Activated T-helper 2 cell treated with anti-CD3 and anti-CD28 coated beads, Interferon-gamma antibody, Interleukin-2, Interleukin-4, amounts not matched to agents 10 μg/mL and 5 μg/mL and 100 μg/mL, durations not matched to agents 14 hours and 24 hours and 36 hours (primary cell): ENCODE measurements at regions of chr17 and their contacts with region 1.

Region 1: GRCh38 chr17:34386697-34387550 is 23.9 kb upstream of the CCL1 start:
- DNase-seq: no peak
- H3K4me3 Mint-ChIP-seq: peak overlapping the region; percentile 23
- H3K27ac Mint-ChIP-seq: peak overlapping the region; percentile 94
- H3K4me1 Mint-ChIP-seq: peaks cover 82% of the 10 kb centered on the region
- H3K27me3 Mint-ChIP-seq: no peaks in the 10 kb centered on the region

Region 2: GRCh38 chr17:33964344-33964979 is 422.5 kb before region 1 on chr17:
- intact Hi-C with region 1: loop called (anchors 10 kb)
- DNase-seq: peak; percentile 23
- H3K4me3 Mint-ChIP-seq: no peak overlapping the region
- H3K27ac Mint-ChIP-seq: no peak overlapping the region
- H3K4me1 Mint-ChIP-seq: peaks cover 36% of the 10 kb centered on the region
- H3K27me3 Mint-ChIP-seq: peaks cover 4% of the 10 kb centered on the region

Region 3: GRCh38 chr17:34398990-34399389 is 12.1 kb after region 1 on chr17:
- intact Hi-C with region 1: loop called (anchors 1 kb)
- DNase-seq: no peak
- H3K4me3 Mint-ChIP-seq: no peak overlapping the region
- H3K27ac Mint-ChIP-seq: peak overlapping the region; percentile 73
- H3K4me1 Mint-ChIP-seq: peaks cover 41% of the 10 kb centered on the region
- H3K27me3 Mint-ChIP-seq: peaks cover 4% of the 10 kb centered on the region

Region 4: DNA sequence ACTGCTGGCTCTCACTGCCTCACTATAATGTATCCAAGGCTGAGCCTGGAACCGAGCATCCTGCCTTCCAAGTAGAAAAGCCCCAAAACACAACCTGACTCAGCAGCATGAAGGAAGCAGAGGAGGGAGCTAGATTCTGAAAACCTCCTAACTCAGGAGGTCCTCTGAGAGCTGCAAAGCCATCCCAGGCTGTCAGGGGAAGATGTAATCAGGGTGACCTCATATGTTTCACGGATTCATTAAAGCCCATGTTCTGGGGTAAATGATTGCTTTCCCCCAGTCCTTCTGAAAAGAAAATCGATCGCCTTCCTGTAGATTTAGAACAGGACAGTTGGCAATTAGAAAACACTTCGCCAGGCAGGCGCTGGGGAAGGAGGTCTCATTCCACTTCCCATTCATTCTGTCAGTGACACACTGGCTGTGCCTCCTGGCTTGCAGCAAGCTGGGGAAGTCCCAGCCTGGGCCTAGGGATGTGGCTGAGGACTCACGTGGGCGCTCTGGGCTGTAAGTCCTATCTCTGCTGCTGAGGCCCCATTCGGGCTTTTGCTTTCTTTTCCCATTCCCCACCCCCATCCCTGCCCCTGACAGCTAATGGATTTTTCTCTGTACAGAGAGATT is 116.7 kb after region 1 on chr17:
- intact Hi-C with region 1: loop called (anchors 5 kb)
- DNase-seq: no peak
- H3K4me3 Mint-ChIP-seq: no peak overlapping the region
- H3K27ac Mint-ChIP-seq: no peak overlapping the region
- H3K4me1 Mint-ChIP-seq: peaks cover 26% of the 10 kb centered on the region
- H3K27me3 Mint-ChIP-seq: peaks cover 26% of the 10 kb centered on the region